Prostate gland (tissue), 2 donors: ENCODE measurements at regions of chr5 and their contacts with region 1.

Region 1: GRCh38 chr5:168047043-168047668 is 244.3 kb upstream of the WWC1 start:
- DNase-seq: peak; percentile 68
- H3K4me3 ChIP-seq: no peak overlapping the region
- H3K27ac ChIP-seq: no peak overlapping the region
- H3K4me1 ChIP-seq: no peaks in the 10 kb centered on the region
- H3K27me3 ChIP-seq: no peaks in the 10 kb centered on the region
- CTCF ChIP-seq: peak in 3 of 4 experiments; percentile 38 to 62 (median 54)
- POLR2A ChIP-seq: no peak

Region 2: DNA sequence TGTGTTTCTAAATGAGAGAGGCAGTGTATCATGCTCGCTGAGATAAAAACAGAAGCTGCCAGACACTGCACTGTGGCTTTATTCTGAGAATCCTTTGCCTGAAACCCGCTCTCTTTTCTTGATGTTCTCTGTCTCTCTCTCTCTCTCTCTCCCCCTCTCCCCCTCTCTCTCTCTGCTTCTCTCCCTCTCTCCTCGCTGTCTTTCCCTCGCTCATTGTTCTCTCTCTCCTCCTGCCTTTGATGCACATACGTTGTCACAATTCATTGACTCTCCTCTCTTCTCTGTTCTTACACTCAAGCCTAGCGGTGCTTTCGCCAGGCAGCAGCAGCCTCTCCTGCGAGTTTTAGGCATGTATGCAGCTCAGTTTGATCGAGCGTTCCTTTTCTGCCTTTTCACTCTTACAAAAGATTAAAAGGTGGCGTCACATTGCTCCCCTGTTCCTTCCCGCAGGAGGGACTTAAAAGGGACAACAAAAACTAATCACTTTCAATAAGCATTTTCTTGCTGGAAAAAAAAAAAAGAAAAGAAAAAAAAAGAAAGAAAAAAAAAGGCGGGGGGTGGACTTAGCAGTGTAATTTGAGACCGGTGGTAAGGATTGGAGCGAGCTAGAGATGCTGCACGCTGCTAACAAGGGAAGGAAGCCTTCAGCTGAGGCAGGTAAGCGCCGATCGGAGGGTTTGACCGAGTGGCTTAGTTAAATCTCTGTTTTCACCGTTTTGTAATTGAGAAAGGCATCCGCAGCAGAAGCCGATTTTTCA is 473.6 kb before region 1 on chr5:
- intact Hi-C with region 1: loop called (anchors 10 kb)
- DNase-seq: peak; percentile 38
- H3K4me3 ChIP-seq: peak overlapping the region; percentile 3 to 16
- H3K27ac ChIP-seq: peak overlapping the region in 1 of 2 donors; percentile 18
- H3K4me1 ChIP-seq: no peaks in the 10 kb centered on the region
- H3K27me3 ChIP-seq: no peaks in the 10 kb centered on the region
- CTCF ChIP-seq: no peak
- POLR2A ChIP-seq: no peak

Region 3: GRCh38 chr5:167730121-167730520 is 317.0 kb before region 1 on chr5:
- intact Hi-C with region 1: no loop called
- DNase-seq: no peak
- H3K4me3 ChIP-seq: no peak overlapping the region
- H3K27ac ChIP-seq: no peak overlapping the region
- H3K4me1 ChIP-seq: no peaks in the 10 kb centered on the region
- H3K27me3 ChIP-seq: no peaks in the 10 kb centered on the region
- CTCF ChIP-seq: no peak
- POLR2A ChIP-seq: no peak

Region 4: GRCh38 chr5:167840527-167841130 is 206.5 kb before region 1 on chr5:
- intact Hi-C with region 1: no loop called
- DNase-seq: no peak
- H3K4me3 ChIP-seq: no peak overlapping the region
- H3K27ac ChIP-seq: no peak overlapping the region
- H3K4me1 ChIP-seq: no peaks in the 10 kb centered on the region
- H3K27me3 ChIP-seq: no peaks in the 10 kb centered on the region
- CTCF ChIP-seq: no peak
- POLR2A ChIP-seq: no peak